Astrocyte of the spinal cord (primary cell): ENCODE measurements at regions of chr7 and their contacts with region 1.

Region 1: DNA sequence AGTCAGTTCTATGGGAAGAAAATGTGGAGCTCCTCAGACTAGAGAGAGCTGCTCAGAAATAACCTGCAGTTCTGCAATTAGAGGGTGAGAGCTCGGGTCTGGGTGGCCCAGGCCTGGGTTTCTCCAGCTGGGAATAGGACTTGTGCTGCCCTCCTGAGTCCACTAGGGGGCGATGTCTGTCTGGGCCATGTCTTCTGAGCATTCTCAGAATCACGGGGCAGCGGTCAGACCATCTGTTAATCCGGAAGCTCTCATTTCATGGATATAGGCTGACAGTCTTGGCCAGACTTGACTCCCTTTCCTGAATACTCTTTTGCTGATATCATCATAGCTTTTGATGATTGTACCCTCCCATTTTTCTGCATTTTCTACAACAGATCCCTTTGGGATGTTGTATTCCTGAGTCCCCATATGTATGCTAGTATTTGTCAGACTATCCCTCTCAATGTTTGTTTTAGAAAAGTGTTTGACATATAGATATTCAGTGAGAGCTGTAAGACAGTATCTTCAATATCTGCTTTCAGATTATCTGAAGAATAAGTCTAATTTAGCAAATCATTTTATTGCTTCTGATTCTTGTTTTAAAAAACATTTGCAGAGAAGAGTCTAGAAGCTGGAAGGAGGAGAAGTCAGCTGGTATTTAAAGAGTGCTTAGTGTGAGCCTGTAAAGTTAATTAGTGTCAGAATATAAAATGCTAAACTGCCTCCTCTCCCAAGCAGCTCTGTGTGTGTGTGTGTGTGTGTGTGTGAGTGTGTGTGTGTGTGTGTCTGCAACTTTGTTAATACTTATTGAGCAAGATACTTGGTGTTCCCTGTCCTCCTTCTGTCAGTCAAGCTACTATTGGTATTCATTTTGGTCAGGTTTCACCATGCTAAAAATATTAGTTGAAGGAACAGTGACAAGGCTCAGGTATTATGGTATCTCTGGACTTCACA is 38.0 kb downstream of the STARD3NL start:
- DNase-seq: peak; percentile 87
- H3K4me3 ChIP-seq: no peak overlapping the region
- CTCF ChIP-seq: peak; percentile 99

Region 2: GRCh38 chr7:37916673-37917660 is 299.0 kb before region 1 on chr7 and contains the start of gene SFRP4:
- in situ Hi-C with region 1: loop called (anchors 25 kb)
- DNase-seq: peak; percentile 88
- H3K4me3 ChIP-seq: peak within 1 kb of the TSS; percentile 60
- CTCF ChIP-seq: peak; percentile 63